ENCODE measurements at regions of chr19 and their contacts with region 1.

Region 1: DNA sequence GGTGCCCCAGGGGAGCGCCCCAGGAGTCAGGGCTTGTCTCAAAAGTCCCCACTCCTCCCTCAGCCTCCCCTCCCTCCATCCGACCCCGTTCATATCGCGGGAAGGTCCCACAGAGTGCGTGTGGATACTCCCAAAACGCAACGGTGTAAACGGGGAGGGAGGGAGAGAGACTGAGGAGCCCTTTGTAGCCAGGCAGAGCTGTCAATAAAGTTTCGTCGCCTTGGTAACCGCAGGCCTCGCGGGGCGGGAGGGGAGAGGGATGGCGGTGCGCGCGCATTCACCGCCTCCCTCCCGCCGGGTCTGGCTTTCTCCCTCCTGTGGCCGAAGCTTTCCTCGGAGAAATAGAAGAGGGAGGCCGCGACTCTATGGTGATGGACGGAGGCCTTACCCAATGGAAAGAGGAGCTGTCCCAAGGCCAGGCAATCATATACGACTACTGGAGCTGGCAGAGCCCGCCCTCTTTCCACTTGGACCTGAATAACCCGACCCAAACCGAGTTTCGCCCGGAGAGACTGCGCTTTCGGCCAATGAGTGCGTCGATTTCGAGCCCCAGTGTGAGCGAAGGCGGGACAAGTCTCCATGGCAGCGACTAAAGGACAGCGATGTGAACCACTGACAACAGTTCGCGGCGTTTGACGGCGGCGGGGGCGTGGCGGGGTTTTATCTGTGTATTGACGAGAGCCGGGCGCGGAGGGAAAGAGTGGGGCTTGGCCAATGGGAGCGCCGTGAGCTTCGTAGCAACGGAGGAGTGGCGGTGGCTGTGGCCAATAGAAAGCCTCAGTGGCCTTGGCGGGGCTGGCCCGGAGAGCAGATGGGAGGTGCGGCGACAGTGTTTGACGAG is at the start of gene KMT5C:
- DNase-seq: peak; percentile 100
- ATAC-seq: peak; percentile 73
- H3K4me3 ChIP-seq: peak within 1 kb of the TSS; percentile 71
- H3K4me3 Mint-ChIP-seq: peak within 1 kb of the TSS; percentile 98
- H3K27ac ChIP-seq: peak within 1 kb of the TSS; percentile 91 to 98
- H3K27ac Mint-ChIP-seq: peak within 1 kb of the TSS; percentile 99
- H3K4me1 ChIP-seq: peaks cover 32% of the 10 kb centered on the region
- H3K4me1 Mint-ChIP-seq: peaks cover 21% of the 10 kb centered on the region
- H3K27me3 ChIP-seq: peaks cover 3 to 4% of the 10 kb centered on the region in 2 experiments
- H3K27me3 Mint-ChIP-seq: peaks cover 22% of the 10 kb centered on the region
- CTCF ChIP-seq: peak; percentile 30
- total RNA-seq, gene KMT5C: 113 to 115 TPM

Region 2: DNA sequence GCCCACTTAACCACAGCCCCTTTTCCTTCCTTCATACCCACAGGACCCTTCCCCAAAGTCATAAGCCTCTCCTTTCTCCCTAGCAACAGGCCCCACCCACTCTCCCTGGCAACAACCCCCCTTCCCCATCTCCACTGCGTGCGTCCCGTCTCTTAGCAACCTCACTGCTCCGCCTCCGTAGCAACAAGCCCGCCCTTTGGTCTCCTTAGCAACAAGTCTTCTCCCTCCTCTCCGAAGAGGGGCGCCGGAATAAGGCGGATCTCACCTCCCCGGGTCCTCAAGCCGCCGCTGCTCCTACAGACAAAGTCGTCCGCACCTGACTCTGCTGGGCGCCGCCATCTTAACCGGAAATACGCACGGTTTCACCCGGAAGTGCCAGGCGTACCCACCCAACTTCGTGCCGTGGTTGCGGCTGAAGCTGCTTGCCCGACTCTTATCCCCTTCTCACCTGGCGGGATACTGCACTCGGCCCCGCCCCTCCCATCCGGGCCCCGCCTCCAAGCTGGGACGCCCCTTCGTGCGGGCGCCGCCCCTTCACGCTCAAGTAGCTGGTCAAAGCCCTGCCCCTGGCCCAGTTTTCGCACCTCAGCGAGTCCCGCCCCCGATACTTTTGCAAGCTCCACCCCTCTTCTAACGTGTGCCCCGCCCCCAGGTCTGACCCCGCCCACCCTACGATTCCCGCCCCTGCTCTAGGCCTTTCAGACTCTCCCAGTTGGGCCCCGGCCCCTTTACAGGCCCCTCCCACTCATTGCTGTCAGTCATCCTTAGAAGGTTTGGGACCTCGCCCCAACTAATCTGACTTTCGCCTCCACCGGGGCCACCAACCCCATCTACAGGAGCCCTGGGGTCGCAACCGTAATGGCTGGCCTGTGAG is 59.3 kb before region 1 on chr19 and contains the start of gene HSPBP1:
- CTCF ChIA-PET with region 1: interaction called, 3 read pairs
- POLR2A ChIA-PET with region 1: interaction called, 25 read pairs
- intact Hi-C with region 1: no loop called
- DNase-seq: peak; percentile 88 to 98 (median 92)
- ATAC-seq: peak; percentile 86
- H3K4me3 ChIP-seq: peak within 1 kb of the TSS; percentile 73
- H3K4me3 Mint-ChIP-seq: peak within 1 kb of the TSS; percentile 98
- H3K27ac ChIP-seq: peak within 1 kb of the TSS; percentile 79 to 88
- H3K27ac Mint-ChIP-seq: peak within 1 kb of the TSS; percentile 93
- H3K4me1 ChIP-seq: peaks cover 41% of the 10 kb centered on the region
- H3K4me1 Mint-ChIP-seq: peaks cover 42% of the 10 kb centered on the region
- H3K27me3 ChIP-seq: no peaks in the 10 kb centered on the region
- H3K27me3 Mint-ChIP-seq: no peaks in the 10 kb centered on the region
- CTCF ChIP-seq: no peak
- total RNA-seq, gene HSPBP1: 14.3 to 15.1 TPM

Region 3: GRCh38 chr19:55353803-55354697 is 14.8 kb after region 1 on chr19:
- CTCF ChIA-PET with region 1: interaction called, 4 read pairs
- POLR2A ChIA-PET with region 1: interaction called, 11 read pairs
- intact Hi-C with region 1: loop called (anchors 1 to 2 kb)
- DNase-seq: peak; percentile 30 to 85 (median 60)
- ATAC-seq: peak; percentile 67
- H3K4me3 ChIP-seq: peak overlapping the region; percentile 54
- H3K4me3 Mint-ChIP-seq: peak overlapping the region; percentile 51
- H3K27ac ChIP-seq: no peak overlapping the region
- H3K27ac Mint-ChIP-seq: no peak overlapping the region
- H3K4me1 ChIP-seq: peaks cover 29% of the 10 kb centered on the region
- H3K4me1 Mint-ChIP-seq: peaks cover 25% of the 10 kb centered on the region
- H3K27me3 ChIP-seq: peaks cover 34% of the 10 kb centered on the region in 2 experiments
- H3K27me3 Mint-ChIP-seq: peaks cover 58% of the 10 kb centered on the region
- CTCF ChIP-seq: no peak

Region 4: DNA sequence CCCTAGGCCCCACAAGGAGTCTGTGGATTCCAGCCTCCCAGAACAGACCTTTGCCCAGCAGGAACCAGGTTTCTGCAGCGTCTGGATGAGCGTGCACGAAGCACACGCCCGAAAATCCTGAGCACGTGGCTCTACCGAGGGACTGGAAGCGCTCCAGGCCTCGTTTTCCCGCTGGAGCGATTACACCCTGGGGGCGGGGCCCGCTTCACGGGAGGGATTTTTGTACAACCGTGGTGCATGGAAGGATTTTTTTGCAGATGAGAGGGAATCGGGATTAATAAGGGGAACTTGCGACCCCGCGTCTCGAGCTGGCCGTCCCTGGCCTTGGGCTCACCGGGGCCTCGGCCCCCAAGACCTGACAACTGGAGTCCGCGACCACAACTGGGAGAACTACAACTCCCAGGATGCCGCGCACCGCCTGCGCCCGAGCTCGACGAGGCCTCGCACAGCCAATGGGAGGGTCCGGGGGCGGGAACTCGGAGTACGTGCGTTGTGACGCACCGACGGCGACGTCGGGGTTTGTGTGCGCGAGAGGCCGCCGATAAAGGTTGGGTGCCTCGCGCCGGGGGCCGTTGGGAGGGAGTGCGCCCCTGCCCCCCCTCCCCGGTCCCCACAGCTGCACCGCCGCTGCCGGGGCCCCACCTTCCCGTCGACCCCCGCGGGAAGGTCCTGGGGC is 137.0 kb after region 1 on chr19 and contains the start of gene ZNF628:
- CTCF ChIA-PET with region 1: no interaction called
- POLR2A ChIA-PET with region 1: interaction called, 14 read pairs
- intact Hi-C with region 1: no loop called
- DNase-seq: peak; percentile 94 to 99 (median 98)
- ATAC-seq: peak; percentile 93
- H3K4me3 ChIP-seq: peak within 1 kb of the TSS; percentile 76
- H3K4me3 Mint-ChIP-seq: peak within 1 kb of the TSS; percentile 91
- H3K27ac ChIP-seq: peak within 1 kb of the TSS; percentile 72 to 77
- H3K27ac Mint-ChIP-seq: peak within 1 kb of the TSS; percentile 93
- H3K4me1 ChIP-seq: peaks cover 26% of the 10 kb centered on the region
- H3K4me1 Mint-ChIP-seq: peaks cover 38% of the 10 kb centered on the region
- H3K27me3 ChIP-seq: no peaks in the 10 kb centered on the region
- H3K27me3 Mint-ChIP-seq: no peaks in the 10 kb centered on the region
- CTCF ChIP-seq: no peak
- total RNA-seq, gene ZNF628: 26.6 to 27.2 TPM

Measured in CD4-positive, alpha-beta T cell (primary cell).